HEK293 (cell line): ENCODE measurements at regions of chr1 and their contacts with region 1.

Region 1: DNA sequence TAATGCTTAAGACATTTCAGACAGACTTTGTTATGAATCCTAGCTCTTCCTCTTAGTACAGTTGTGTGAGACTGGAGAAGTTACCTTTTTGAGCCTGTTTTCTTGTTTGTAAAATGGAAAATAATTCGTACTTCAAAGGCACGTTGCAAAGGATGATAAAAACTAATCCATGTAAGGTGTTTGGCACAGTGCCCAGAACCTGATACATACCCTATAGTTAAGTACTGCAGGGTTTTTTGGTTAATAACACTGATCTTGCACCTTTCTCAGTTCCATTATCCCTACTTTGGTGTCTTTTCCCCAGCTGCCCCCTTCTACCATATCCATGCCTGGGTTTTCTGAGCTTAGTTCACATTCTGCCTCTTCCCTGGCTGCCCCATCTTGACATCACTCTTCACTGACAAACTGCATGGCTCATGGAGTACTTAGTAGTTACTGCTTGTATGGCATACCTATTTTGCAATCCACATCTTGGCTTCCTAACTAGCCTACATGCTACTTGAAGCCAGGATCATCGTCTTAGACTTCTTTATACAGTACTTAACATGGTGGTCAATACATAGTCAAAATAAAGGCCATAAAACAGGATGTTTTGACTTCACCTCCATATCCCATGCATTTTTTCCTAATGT is 10.1 kb downstream of the CCDC185 start:
- H3K4me3 ChIP-seq: no peak overlapping the region
- H3K27ac ChIP-seq: no peak overlapping the region
- H3K4me1 ChIP-seq: 0 out of 2 replicates have a peak, but pooled peaks cover 4% of the 10 kb centered on the region
- CTCF ChIP-seq: no peak

Region 2: DNA sequence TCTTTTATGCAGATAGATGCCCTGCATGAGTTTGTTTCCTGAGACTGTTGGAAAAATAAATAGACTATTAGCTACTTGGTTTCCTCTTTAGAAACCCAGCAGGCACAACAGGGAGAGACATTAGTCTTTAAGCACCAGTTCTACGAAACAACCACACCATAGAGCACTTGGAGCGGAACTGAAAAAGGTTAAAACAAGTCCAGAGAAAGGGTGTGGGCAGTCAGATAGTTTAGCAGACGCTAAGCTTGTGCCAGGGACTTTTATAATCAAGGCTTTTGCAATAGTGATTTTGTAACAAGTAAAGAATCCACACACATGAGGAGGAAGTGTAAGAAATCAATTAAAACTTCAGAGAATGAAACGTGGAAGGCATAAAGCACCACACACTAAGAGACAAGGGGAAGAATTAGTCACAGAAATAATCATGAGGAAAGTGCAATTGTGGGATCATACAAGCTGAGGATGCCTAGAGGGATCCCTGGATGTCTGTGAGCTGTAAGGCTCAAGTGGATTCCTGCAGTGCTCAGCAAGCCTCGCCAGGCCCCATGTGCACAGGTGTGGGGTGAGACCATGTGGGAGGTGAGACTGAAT is 222.5 kb before region 1 on chr1:
- CTCF ChIA-PET with region 1: no interaction called
- POLR2A ChIA-PET with region 1: no interaction called
- H3K4me3 ChIP-seq: no peak overlapping the region
- H3K27ac ChIP-seq: no peak overlapping the region
- H3K4me1 ChIP-seq: no peaks in the 10 kb centered on the region
- CTCF ChIP-seq: no peak

Region 3: GRCh38 chr1:223421676-223422075 is 18.4 kb after region 1 on chr1:
- CTCF ChIA-PET with region 1: no interaction called
- POLR2A ChIA-PET with region 1: interaction called, 10 read pairs
- H3K4me3 ChIP-seq: no peak overlapping the region
- H3K27ac ChIP-seq: no peak overlapping the region
- H3K4me1 ChIP-seq: no peaks in the 10 kb centered on the region
- CTCF ChIP-seq: no peak

Region 4: DNA sequence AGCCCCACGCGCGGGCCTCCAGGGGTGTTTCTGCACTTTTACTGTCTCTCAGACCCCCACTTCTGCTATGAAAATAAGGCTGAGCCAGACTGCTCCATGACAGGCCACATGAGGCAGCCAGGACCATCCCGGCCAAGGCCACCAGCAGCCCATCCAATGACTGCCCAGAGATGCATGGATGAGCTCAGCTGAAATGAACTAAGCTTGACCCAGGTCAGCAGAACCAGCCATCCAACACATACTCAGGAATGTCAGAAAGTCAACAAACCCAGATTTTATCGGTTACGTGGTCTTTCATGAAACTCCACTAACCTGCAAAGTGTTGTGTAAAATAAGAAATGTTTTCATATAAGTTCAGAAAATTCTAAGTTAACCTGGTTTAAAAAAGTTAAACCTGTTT is 41.1 kb after region 1 on chr1:
- CTCF ChIA-PET with region 1: no interaction called
- POLR2A ChIA-PET with region 1: no interaction called
- H3K4me3 ChIP-seq: no peak overlapping the region
- H3K27ac ChIP-seq: no peak overlapping the region
- H3K4me1 ChIP-seq: no peaks in the 10 kb centered on the region
- CTCF ChIP-seq: no peak